Endothelial cell of umbilical vein (primary cell): ENCODE measurements at regions of chr6 and their contacts with region 1.

Region 1: GRCh38 chr6:105363100-105363754 is 39.7 kb downstream of the PREP start:
- DNase-seq: peak; percentile 30
- H3K4me3 ChIP-seq: no peak overlapping the region
- H3K27ac ChIP-seq: no peak overlapping the region
- H3K4me1 ChIP-seq: peaks cover 20% of the 10 kb centered on the region
- H3K27me3 ChIP-seq: no peaks in the 10 kb centered on the region
- CTCF ChIP-seq: peak; percentile 23 to 29
- POLR2A ChIP-seq: no peak

Region 2: DNA sequence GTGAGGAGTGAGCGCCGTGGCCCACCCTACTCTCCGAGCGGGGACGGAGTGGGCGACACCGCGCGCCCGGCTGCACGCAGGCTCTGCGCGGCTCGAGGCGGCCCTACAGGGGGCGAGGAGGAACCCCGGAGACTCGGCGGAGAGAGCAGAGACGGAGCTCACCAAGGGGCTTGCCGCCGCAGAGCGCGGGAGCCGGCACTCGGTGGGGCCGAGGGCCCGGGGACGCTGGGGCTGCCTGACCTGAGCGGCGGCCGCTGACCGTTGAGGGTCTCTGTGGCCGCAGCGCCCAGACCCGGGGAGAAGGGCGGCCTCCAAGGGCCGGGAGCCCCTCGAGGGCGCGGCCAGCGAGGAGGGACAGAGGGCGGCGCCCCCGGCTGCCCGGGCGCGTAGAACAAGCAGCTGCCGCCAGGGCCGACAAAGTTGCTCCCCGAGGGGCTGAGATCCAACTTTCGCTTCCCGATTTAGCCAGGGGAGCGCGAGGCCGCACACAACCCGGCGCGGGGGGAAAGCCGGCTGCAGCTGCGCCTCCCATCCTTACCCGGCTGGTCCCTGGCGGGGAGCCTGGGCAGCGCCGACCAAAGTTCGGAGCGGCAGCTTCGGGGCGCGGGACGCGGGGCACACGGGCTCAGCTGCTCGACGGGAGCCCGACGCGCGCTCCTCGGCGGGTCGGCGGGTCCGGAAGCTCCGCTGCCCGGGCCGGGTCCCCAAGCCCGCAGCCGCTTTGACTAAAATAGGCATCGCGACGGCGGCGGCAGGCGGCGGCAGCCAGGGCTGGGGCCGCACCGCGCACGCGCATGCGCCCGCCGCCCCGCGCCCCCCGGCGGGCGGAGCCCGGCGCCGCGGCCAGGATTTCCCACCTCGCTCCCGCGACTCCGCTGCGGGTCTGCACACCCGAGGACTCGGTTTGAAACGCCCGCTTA is 226.5 kb before region 1 on chr6:
- CTCF ChIA-PET with region 1: interaction called, 29 read pairs
- POLR2A ChIA-PET with region 1: no interaction called
- dilution Hi-C with region 1: no loop called
- intact Hi-C with region 1: loop called (anchors 5 kb)
- DNase-seq: peak; percentile 55
- H3K4me3 ChIP-seq: peak overlapping the region; percentile 53 to 96 (median 76)
- H3K27ac ChIP-seq: peak overlapping the region; percentile 38
- H3K4me1 ChIP-seq: peaks cover 11% of the 10 kb centered on the region
- H3K27me3 ChIP-seq: no peaks in the 10 kb centered on the region
- CTCF ChIP-seq: peak in 1 of 2 donors; percentile 38
- POLR2A ChIP-seq: no peak

Region 3: DNA sequence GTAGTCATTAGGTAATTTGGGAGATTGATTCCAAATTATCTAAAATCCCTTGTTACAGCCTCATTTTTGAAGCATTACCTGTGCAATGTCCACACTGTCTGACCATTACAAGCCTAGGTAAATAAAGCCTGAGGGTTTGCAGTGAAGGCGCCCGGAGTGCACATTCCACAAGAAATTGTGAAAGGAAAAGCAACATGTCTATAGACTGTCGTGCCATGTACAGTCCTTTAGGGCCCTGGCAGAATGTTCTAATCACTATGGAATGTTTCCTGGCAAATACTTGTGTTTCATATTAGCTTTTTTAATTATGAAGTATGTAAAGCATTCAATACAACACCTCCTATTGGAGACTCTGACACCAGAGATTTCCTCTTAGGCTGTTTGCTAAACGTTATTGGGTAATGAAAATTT is 10.8 kb after region 1 on chr6:
- CTCF ChIA-PET with region 1: interaction called, 17 read pairs
- POLR2A ChIA-PET with region 1: interaction called, 3 read pairs
- dilution Hi-C with region 1: no loop called
- intact Hi-C with region 1: loop called (anchors 2 kb)
- DNase-seq: peak; percentile 82
- H3K4me3 ChIP-seq: no peak overlapping the region
- H3K27ac ChIP-seq: peak overlapping the region; percentile 52
- H3K4me1 ChIP-seq: peaks cover 6% of the 10 kb centered on the region
- H3K27me3 ChIP-seq: no peaks in the 10 kb centered on the region
- CTCF ChIP-seq: no peak
- POLR2A ChIP-seq: no peak

Region 4: GRCh38 chr6:105382496-105382895 is 19.3 kb after region 1 on chr6:
- CTCF ChIA-PET with region 1: interaction called, 20 read pairs
- POLR2A ChIA-PET with region 1: no interaction called
- dilution Hi-C with region 1: no loop called
- intact Hi-C with region 1: no loop called
- DNase-seq: peak; percentile 59
- H3K4me3 ChIP-seq: no peak overlapping the region
- H3K27ac ChIP-seq: peak overlapping the region; percentile 53
- H3K4me1 ChIP-seq: peaks cover 13% of the 10 kb centered on the region
- H3K27me3 ChIP-seq: no peaks in the 10 kb centered on the region
- CTCF ChIP-seq: no peak
- POLR2A ChIP-seq: no peak

Region 5: GRCh38 chr6:105608711-105609374 is 245.6 kb after region 1 on chr6:
- CTCF ChIA-PET with region 1: no interaction called
- POLR2A ChIA-PET with region 1: no interaction called
- dilution Hi-C with region 1: no loop called
- intact Hi-C with region 1: no loop called
- DNase-seq: no peak
- H3K4me3 ChIP-seq: no peak overlapping the region
- H3K27ac ChIP-seq: no peak overlapping the region
- H3K4me1 ChIP-seq: no peaks in the 10 kb centered on the region
- H3K27me3 ChIP-seq: no peaks in the 10 kb centered on the region
- CTCF ChIP-seq: no peak
- POLR2A ChIP-seq: no peak